Natural killer cell (primary cell): ENCODE measurements at regions of chr16 and their contacts with region 1.

Region 1: DNA sequence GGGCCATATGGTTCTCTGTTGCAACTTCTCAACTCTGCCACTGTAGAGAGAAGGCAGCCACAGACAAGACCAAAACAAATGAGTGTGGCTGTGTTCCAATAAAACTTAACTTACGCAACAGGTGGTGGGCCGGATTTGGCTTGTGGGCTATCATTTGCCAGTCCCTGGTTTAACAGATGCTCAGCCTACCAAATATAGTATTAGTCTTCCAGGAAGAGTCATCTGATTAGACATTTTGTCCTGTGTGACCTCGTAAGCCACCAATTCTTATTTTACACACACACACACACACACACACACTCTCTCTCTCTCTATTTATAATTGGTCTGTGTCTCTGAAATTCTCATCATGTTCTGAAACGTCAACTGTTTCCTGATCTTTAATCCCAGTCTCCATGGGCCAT is 245.9 kb downstream of the XYLT1 start:
- DNase-seq: peak; percentile 63 to 66
- ATAC-seq: peak; percentile 83 to 92 (median 83)
- H3K4me3 ChIP-seq: no peak overlapping the region
- H3K4me3 Mint-ChIP-seq: peak overlapping the region; percentile 82
- H3K27ac ChIP-seq: peak overlapping the region; percentile 28
- H3K27ac Mint-ChIP-seq: peak overlapping the region; percentile 79 to 84
- H3K4me1 ChIP-seq: peaks cover 30% of the 10 kb centered on the region
- H3K4me1 Mint-ChIP-seq: peaks cover 38 to 50% of the 10 kb centered on the region in 2 donors
- H3K27me3 ChIP-seq: no peaks in the 10 kb centered on the region
- H3K27me3 Mint-ChIP-seq: no peaks in the 10 kb centered on the region
- CTCF ChIP-seq: no peak

Region 2: GRCh38 chr16:17467923-17468540 is 243.2 kb after region 1 on chr16:
- intact Hi-C with region 1: loop called (anchors 5 kb)
- DNase-seq: peak in 1 of 2 donors; percentile 66
- ATAC-seq: peak in 1 of 3 donors; percentile 30
- H3K4me3 ChIP-seq: no peak overlapping the region
- H3K4me3 Mint-ChIP-seq: peak overlapping the region; percentile 93
- H3K27ac ChIP-seq: no peak overlapping the region
- H3K27ac Mint-ChIP-seq: peak overlapping the region in 1 of 2 donors; percentile 85
- H3K4me1 ChIP-seq: peaks cover 34% of the 10 kb centered on the region
- H3K4me1 Mint-ChIP-seq: peaks cover 52 to 54% of the 10 kb centered on the region in 2 donors
- H3K27me3 ChIP-seq: no peaks in the 10 kb centered on the region
- H3K27me3 Mint-ChIP-seq: no peaks in the 10 kb centered on the region
- CTCF ChIP-seq: no peak